ENCODE measurements at regions of chr20 and their contacts with region 1.

Region 1: GRCh38 chr20:6034134-6034969 is 19.5 kb downstream of the LRRN4 start:
- DNase-seq: peak in 1 of 5 donors; percentile 18
- ATAC-seq: peak; percentile 87 to 91 (median 89)
- H3K4me3 ChIP-seq: no peak overlapping the region
- H3K27ac ChIP-seq: peak overlapping the region; percentile 39 to 90 (median 74)
- H3K4me1 ChIP-seq: peaks cover 0 to 75% (median 17%) of the 10 kb centered on the region in 12 donors
- H3K27me3 ChIP-seq: no peaks in the 10 kb centered on the region
- CTCF ChIP-seq: no peak
- POLR2A ChIP-seq: no peak

Region 2: DNA sequence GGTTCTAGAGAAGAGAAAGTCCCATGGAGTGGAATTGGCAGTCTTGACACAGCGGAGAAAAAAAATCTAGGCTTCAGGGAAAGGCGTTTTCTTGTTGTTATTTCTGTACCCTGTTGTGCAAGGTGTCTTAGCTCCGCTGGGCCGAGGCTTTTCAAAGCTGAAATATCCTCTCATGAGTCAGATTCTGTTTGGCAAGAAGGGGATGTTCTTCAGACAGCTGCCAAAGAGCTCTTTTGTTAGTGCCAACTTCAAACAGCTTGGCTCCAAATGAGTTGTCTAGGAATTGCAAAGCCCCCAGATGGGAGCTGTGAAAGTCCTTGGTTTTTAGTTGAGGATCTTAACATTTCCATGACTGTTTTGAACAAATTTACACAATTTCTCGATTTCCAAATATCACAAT is 26.1 kb before region 1 on chr20:
- intact Hi-C with region 1: loop called in 1 of 10 experiments (anchors 2 kb)
- DNase-seq: peak in 3 of 5 donors; percentile 21 to 67 (median 55)
- ATAC-seq: peak in 2 of 4 donors; percentile 52 to 53
- H3K4me3 ChIP-seq: peak overlapping the region in 9 of 12 donors; percentile 61 to 97 (median 82)
- H3K27ac ChIP-seq: peak overlapping the region; percentile 0 to 94 (median 86)
- H3K4me1 ChIP-seq: peaks cover 0 to 39% (median 20%) of the 10 kb centered on the region in 12 donors
- H3K27me3 ChIP-seq: no peaks in the 10 kb centered on the region
- CTCF ChIP-seq: no peak
- POLR2A ChIP-seq: no peak

Measured in heart left ventricle (tissue), 16 donors.